Colonic mucosa (tissue), 4 donors: ENCODE measurements at regions of chr1 and their contacts with region 1.

Region 1: GRCh38 chr1:222792744-222793143 is 22.1 kb upstream of the DISP1 start:
- DNase-seq: no peak
- H3K4me3 ChIP-seq: no peak overlapping the region
- H3K27ac ChIP-seq: no peak overlapping the region
- H3K4me1 ChIP-seq: no peaks in the 10 kb centered on the region
- H3K27me3 ChIP-seq: no peaks in the 10 kb centered on the region
- CTCF ChIP-seq: peak; percentile 37

Region 2: GRCh38 chr1:222182641-222183040 is 610.1 kb before region 1 on chr1:
- intact Hi-C with region 1: no loop called
- DNase-seq: no peak
- H3K4me3 ChIP-seq: no peak overlapping the region
- H3K27ac ChIP-seq: no peak overlapping the region
- H3K4me1 ChIP-seq: no peaks in the 10 kb centered on the region
- H3K27me3 ChIP-seq: no peaks in the 10 kb centered on the region
- CTCF ChIP-seq: no peak

Region 3: DNA sequence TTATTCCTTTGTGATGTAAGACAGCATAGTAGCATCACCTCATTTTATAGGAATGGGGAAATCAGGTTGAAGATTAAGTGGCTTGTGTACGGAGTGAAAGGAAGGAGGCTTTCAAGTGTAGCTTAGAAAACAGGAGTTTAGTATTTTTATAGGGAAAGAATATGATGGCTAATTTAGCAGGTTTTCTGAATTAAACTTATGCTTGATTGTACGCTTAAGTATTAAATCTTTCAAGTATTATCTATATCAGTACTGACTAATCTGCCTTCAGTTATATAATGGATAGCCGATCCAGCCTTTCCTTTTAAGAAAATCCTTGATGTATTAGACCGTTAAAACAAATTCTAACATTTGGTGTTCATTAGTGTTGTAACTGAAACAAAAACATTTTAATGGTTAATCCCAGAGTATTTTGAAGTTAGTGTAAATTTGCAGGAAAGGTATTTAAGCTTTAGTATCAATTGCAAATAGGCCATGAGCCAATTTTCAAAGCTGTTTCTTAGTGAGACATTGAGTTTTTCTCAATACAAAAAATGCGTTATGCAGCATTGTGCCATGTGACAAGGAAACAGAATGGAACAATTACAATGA is 51.5 kb after region 1 on chr1:
- intact Hi-C with region 1: no loop called
- DNase-seq: no peak
- H3K4me3 ChIP-seq: no peak overlapping the region
- H3K27ac ChIP-seq: no peak overlapping the region
- H3K4me1 ChIP-seq: no peaks in the 10 kb centered on the region
- H3K27me3 ChIP-seq: no peaks in the 10 kb centered on the region
- CTCF ChIP-seq: no peak

Region 4: DNA sequence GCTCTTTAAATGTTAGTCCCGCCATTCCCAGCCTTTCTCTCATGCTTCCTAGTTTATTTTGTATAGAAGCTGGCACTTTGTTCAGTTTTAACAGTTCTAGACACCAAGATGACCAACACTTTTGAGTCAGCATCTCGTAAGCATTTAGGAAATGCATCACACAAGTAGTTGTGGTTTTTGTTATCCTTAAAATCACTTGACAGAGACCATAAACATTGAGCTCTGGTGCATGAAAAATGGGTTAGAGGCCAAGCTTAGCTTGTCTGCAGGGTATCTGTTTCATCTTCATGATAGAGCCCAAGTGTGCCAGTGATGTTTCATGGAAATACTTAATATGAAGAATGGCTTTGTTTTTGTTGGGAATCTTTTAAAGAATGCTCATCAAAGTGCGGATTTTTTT is 181.8 kb after region 1 on chr1:
- intact Hi-C with region 1: no loop called
- DNase-seq: no peak
- H3K4me3 ChIP-seq: no peak overlapping the region
- H3K27ac ChIP-seq: no peak overlapping the region
- H3K4me1 ChIP-seq: no peaks in the 10 kb centered on the region
- H3K27me3 ChIP-seq: no peaks in the 10 kb centered on the region
- CTCF ChIP-seq: no peak

Region 5: GRCh38 chr1:223001653-223002634 is 209.2 kb after region 1 on chr1:
- intact Hi-C with region 1: loop called (anchors 10 kb)
- DNase-seq: no peak
- H3K4me3 ChIP-seq: no peak overlapping the region
- H3K27ac ChIP-seq: no peak overlapping the region
- H3K4me1 ChIP-seq: no peaks in the 10 kb centered on the region
- H3K27me3 ChIP-seq: no peaks in the 10 kb centered on the region
- CTCF ChIP-seq: no peak